Left ventricle myocardium inferior (tissue), 1 donor: ENCODE measurements at regions of chr3 and their contacts with region 1.

Region 1: GRCh38 chr3:128170805-128171516 is 17.7 kb downstream of the EEFSEC start:
- DNase-seq: no peak
- H3K4me3 ChIP-seq: no peak overlapping the region
- H3K27ac ChIP-seq: no peak overlapping the region
- H3K4me1 ChIP-seq: peaks cover 69% of the 10 kb centered on the region
- H3K27me3 ChIP-seq: no peaks in the 10 kb centered on the region
- CTCF ChIP-seq: peak; percentile 81

Region 2: GRCh38 chr3:128316481-128316891 is 145.5 kb after region 1 on chr3:
- intact Hi-C with region 1: loop called (anchors 10 kb)
- DNase-seq: no peak
- H3K4me3 ChIP-seq: no peak overlapping the region
- H3K27ac ChIP-seq: no peak overlapping the region
- H3K4me1 ChIP-seq: peaks cover 25% of the 10 kb centered on the region
- H3K27me3 ChIP-seq: no peaks in the 10 kb centered on the region
- CTCF ChIP-seq: no peak

Region 3: DNA sequence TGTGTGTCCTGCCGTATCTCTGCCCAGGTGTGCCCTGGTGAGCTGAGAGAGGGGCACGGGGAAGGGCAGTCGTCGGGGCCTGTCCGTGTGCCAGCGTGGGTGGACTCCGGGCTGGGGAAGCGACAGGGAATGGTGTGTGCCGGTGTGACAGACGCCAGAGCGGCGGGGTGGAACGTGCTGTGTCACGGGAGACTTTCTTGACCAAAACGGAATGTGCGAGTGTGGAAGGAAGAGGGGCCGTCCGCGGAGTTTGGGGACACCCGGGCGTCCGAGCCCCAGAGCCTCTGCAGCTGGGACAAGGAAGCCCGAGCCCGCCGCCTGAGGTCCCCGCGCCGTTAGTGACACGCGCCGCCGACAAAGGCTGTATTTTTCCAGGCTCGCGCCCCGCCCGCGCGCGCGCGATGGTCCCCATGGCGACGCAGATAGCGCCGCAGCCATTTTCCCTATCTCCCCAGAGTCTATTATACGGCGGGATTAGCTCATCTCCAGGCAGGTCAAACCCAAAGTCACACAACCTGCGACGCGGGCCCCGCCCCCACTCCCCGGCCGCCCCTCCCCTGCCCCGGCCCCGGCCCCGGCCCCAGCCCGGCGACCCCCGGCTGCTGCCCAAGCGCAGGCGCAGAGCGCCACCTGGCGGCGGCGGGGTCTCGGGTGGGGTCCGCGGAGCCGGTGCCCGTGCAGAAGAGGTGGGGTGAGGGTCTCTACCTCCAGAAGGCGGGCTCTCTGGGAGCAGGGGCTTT is 326.6 kb after region 1 on chr3:
- intact Hi-C with region 1: loop called (anchors 10 kb)
- DNase-seq: peak; percentile 65
- H3K4me3 ChIP-seq: peak overlapping the region; percentile 70
- H3K27ac ChIP-seq: peak overlapping the region; percentile 33
- H3K4me1 ChIP-seq: peaks cover 29% of the 10 kb centered on the region
- H3K27me3 ChIP-seq: peaks cover 98% of the 10 kb centered on the region
- CTCF ChIP-seq: peak; percentile 87